WTC11 (cell line): ENCODE measurements at regions of chr9 and their contacts with region 1.

Region 1: GRCh38 chr9:18143028-18143745 is 330.8 kb upstream of the ADAMTSL1 start:
- DNase-seq: peak; percentile 10
- ATAC-seq: peak; percentile 82
- H3K4me3 Mint-ChIP-seq: no peak overlapping the region
- H3K27ac Mint-ChIP-seq: no peak overlapping the region
- H3K4me1 Mint-ChIP-seq: peaks cover 12% of the 10 kb centered on the region
- H3K27me3 Mint-ChIP-seq: no peaks in the 10 kb centered on the region
- CTCF ChIP-seq: no peak

Region 2: DNA sequence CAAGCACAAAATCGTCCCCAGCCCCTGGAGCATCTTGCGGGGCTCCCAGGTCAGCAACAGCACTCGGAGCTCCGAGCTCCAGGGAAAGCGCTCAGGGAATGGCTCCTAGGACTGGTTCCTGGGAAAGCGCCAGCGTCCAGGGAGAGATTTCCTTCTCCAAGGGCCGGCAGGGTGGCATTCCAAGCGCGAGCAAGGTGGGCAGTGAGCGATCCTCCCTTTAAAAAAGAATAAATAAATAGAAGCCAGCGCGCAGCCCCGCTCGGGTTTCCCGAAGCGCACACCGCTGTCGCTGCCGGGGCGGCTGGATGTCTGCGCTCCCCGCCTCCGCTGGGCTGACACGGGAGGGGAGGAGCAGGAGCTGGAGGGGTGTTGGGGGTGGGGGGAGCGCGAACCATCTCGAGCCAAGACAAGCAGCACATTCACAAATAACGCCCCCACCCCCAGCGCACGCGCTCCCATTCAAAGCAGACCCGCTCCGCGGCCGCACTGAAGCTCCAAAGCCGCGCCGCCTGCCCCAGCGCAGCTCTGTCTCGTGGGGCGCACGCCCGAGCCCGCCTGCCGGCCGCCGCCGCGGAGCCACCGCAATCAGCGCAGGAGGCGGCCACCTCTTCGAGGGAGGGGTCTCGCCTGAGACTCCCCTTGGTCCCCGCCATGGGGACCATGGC is 236.9 kb before region 1 on chr9:
- CTCF ChIA-PET with region 1: no interaction called
- POLR2A ChIA-PET with region 1: no interaction called
- DNase-seq: peak; percentile 63
- ATAC-seq: peak; percentile 58
- H3K4me3 Mint-ChIP-seq: peak overlapping the region; percentile 79
- H3K27ac Mint-ChIP-seq: no peak overlapping the region
- H3K4me1 Mint-ChIP-seq: peaks cover 11% of the 10 kb centered on the region
- H3K27me3 Mint-ChIP-seq: peaks cover 70% of the 10 kb centered on the region
- CTCF ChIP-seq: no peak

Region 3: GRCh38 chr9:18092138-18092537 is 51.0 kb before region 1 on chr9:
- CTCF ChIA-PET with region 1: no interaction called
- POLR2A ChIA-PET with region 1: no interaction called
- DNase-seq: no peak
- ATAC-seq: no peak
- H3K4me3 Mint-ChIP-seq: no peak overlapping the region
- H3K27ac Mint-ChIP-seq: no peak overlapping the region
- H3K4me1 Mint-ChIP-seq: no peaks in the 10 kb centered on the region
- H3K27me3 Mint-ChIP-seq: no peaks in the 10 kb centered on the region
- CTCF ChIP-seq: no peak

Region 4: DNA sequence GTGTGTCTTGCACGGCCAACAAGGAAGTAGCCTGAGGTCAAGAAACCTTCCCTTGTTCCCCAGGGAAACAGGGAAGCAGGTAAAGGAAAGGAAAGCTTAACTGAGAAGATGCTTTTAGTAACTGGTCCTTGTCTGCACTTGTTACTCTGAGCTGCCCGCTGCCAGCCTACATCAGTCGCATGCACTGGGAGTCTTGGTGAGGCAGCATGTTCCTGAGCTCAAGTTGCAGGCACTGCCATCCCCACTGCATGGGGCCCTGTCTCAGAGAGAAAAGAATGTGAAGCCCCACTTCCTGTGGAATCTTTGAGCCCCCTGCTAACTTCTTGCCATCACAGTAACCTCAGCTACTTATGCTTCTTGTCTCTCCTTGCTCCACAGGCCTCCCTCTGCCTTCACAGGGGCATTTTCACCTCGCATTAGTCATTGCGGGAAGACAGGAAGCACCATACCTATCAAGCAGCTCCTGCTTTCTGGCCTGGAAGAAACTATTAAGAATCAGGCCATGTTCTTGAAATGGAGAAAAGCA is 13.3 kb before region 1 on chr9:
- CTCF ChIA-PET with region 1: interaction called, 13 read pairs
- POLR2A ChIA-PET with region 1: no interaction called
- DNase-seq: peak; percentile 14
- ATAC-seq: peak; percentile 81
- H3K4me3 Mint-ChIP-seq: no peak overlapping the region
- H3K27ac Mint-ChIP-seq: no peak overlapping the region
- H3K4me1 Mint-ChIP-seq: peaks cover 15% of the 10 kb centered on the region
- H3K27me3 Mint-ChIP-seq: no peaks in the 10 kb centered on the region
- CTCF ChIP-seq: no peak